Heart right ventricle (tissue), 16 donors: ENCODE measurements at regions of chr12 and their contacts with region 1.

Region 1: DNA sequence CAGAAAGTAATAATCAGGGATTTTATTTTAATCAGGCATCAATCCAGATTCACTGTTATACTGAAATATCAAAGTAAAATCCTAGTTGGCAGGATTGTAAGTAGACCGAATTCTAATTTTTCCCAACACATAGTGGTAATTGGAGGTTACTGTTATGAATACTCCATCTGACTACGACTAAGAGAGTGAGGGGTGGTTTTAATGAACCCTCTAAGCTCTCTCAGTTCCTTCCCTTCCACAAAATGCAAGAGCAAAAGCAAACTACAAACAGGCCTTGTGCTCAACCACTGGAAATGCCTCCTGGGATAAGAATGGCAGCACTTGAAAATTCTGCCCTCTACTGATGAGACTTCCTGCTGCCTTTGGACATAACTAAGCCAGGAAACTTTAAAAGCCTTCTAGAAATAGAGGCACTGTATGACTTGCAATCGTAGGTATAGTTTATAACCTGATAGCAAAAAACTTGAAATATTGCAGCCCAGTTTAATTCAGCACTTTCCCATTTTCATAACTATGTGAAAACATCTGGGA is 184.8 kb downstream of the SLC16A7 start:
- DNase-seq: no peak
- ATAC-seq: peak in 6 of 8 donors; percentile 34 to 69 (median 55)
- H3K4me3 ChIP-seq: no peak overlapping the region
- H3K27ac ChIP-seq: peak overlapping the region in 1 of 10 donors; percentile 14
- H3K4me1 ChIP-seq: no peaks in the 10 kb centered on the region
- H3K27me3 ChIP-seq: no peaks in the 10 kb centered on the region
- CTCF ChIP-seq: peak in 8 of 9 donors; percentile 6 to 58 (median 40)

Region 2: GRCh38 chr12:59650402-59651228 is 130.1 kb before region 1 on chr12:
- intact Hi-C with region 1: loop called in 1 of 10 experiments (anchors 10 kb)
- DNase-seq: no peak
- ATAC-seq: peak; percentile 29 to 74 (median 64)
- H3K4me3 ChIP-seq: no peak overlapping the region
- H3K27ac ChIP-seq: peak overlapping the region in 8 of 10 donors; percentile 26 to 68 (median 56)
- H3K4me1 ChIP-seq: peaks cover 0 to 36% (median 7%) of the 10 kb centered on the region in 9 donors
- H3K27me3 ChIP-seq: no peaks in the 10 kb centered on the region
- CTCF ChIP-seq: peak in 3 of 9 donors; percentile 8 to 32 (median 22)

Region 3: GRCh38 chr12:59698599-59698998 is 82.1 kb before region 1 on chr12:
- intact Hi-C with region 1: no loop called
- DNase-seq: no peak
- ATAC-seq: peak in 1 of 8 donors; percentile 75
- H3K4me3 ChIP-seq: no peak overlapping the region
- H3K27ac ChIP-seq: peak overlapping the region in 1 of 10 donors; percentile 23
- H3K4me1 ChIP-seq: peaks cover 0 to 23% (median 10%) of the 10 kb centered on the region in 9 donors
- H3K27me3 ChIP-seq: no peaks in the 10 kb centered on the region
- CTCF ChIP-seq: no peak

Region 4: GRCh38 chr12:59742841-59743240 is 37.8 kb before region 1 on chr12:
- intact Hi-C with region 1: no loop called
- DNase-seq: no peak
- ATAC-seq: no peak
- H3K4me3 ChIP-seq: no peak overlapping the region
- H3K27ac ChIP-seq: no peak overlapping the region
- H3K4me1 ChIP-seq: peaks cover 0 to 14% (median 0%) of the 10 kb centered on the region in 9 donors
- H3K27me3 ChIP-seq: no peaks in the 10 kb centered on the region
- CTCF ChIP-seq: no peak

Region 5: GRCh38 chr12:59803735-59804134 is 23.1 kb after region 1 on chr12:
- intact Hi-C with region 1: no loop called
- DNase-seq: no peak
- ATAC-seq: no peak
- H3K4me3 ChIP-seq: peak overlapping the region in 1 of 10 donors; percentile 16
- H3K27ac ChIP-seq: no peak overlapping the region
- H3K4me1 ChIP-seq: peaks cover 0 to 4% (median 0%) of the 10 kb centered on the region in 9 donors
- H3K27me3 ChIP-seq: no peaks in the 10 kb centered on the region
- CTCF ChIP-seq: no peak

Region 6: GRCh38 chr12:59839514-59839913 is 58.8 kb after region 1 on chr12:
- intact Hi-C with region 1: no loop called
- DNase-seq: no peak
- ATAC-seq: peak in 1 of 8 donors; percentile 33
- H3K4me3 ChIP-seq: no peak overlapping the region
- H3K27ac ChIP-seq: no peak overlapping the region
- H3K4me1 ChIP-seq: no peaks in the 10 kb centered on the region
- H3K27me3 ChIP-seq: no peaks in the 10 kb centered on the region
- CTCF ChIP-seq: no peak